Mammary epithelial cell (primary cell): ENCODE measurements at regions of chr22 and their contacts with region 1.

Region 1: DNA sequence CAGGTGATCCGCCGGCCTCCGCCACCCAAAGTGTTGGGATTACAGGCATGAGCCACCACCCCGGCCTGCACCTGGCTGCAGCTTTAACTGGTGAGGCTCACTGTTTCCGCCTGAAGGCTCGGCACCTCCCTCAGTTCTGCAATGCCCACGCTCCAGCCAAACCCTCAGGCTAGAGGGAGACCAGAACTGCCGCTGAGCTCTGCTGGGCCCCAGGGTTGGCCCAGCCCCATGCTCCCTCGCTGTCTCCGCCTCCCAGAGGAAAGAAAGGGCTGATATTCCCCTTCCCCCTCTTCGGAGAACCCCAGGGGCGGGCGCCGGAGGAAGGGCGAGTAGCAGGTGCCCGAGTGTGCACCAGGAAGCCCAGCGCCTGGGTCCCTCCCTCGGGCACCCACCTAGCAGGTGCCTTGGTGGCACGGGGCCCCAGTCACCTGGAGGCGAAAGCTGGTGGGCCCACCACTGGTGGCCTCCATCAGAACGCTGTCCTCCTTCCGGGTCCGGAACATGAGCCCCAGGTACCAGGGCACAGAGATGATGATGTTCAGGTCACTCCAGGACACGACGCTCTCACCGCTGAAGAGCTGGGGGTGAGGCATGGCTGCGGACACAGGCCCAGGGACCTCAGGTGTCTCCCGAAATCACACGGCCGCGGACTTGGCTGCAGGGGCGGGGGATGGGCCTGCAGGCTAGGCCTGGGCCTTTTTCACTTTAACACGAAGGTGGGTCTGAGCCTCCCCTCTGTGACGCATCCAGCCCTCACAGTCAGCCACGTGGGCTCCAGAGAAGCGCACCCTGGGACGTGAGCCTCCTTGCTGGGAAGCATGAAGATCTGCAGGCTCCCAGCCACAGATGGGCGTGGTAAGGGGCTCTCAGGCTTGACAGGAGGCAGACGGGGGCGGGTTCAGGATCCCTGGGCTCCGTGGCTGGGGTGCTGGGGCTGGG is 73.3 kb downstream of the TRMU start:
- DNase-seq: no peak
- H3K4me3 ChIP-seq: no peak overlapping the region
- H3K27ac ChIP-seq: no peak overlapping the region
- H3K4me1 ChIP-seq: no peaks in the 10 kb centered on the region
- H3K27me3 ChIP-seq: no peaks in the 10 kb centered on the region
- CTCF ChIP-seq: no peak

Region 2: GRCh38 chr22:46444390-46444854 is 35.6 kb after region 1 on chr22:
- CTCF ChIA-PET with region 1: no interaction called
- dilution Hi-C with region 1: loop called (anchors 5 kb)
- in situ Hi-C with region 1: no loop called
- intact Hi-C with region 1: no loop called
- DNase-seq: no peak
- H3K4me3 ChIP-seq: no peak overlapping the region
- H3K27ac ChIP-seq: no peak overlapping the region
- H3K4me1 ChIP-seq: peaks cover 4% of the 10 kb centered on the region
- H3K27me3 ChIP-seq: no peaks in the 10 kb centered on the region
- CTCF ChIP-seq: no peak